ENCODE measurements at regions of chr16 and their contacts with region 1.

Region 1: GRCh38 chr16:27505297-27506236 is 44.1 kb downstream of the GTF3C1 start:
- DNase-seq: no peak
- H3K4me3 ChIP-seq: no peak overlapping the region
- H3K27ac ChIP-seq: no peak overlapping the region
- H3K4me1 ChIP-seq: no peaks in the 10 kb centered on the region
- H3K27me3 ChIP-seq: no peaks in the 10 kb centered on the region

Region 2: GRCh38 chr16:27217256-27217655 is 288.3 kb before region 1 on chr16:
- CTCF ChIA-PET with region 1: no interaction called
- POLR2A ChIA-PET with region 1: no interaction called
- DNase-seq: no peak
- H3K4me3 ChIP-seq: no peak overlapping the region
- H3K27ac ChIP-seq: no peak overlapping the region
- H3K4me1 ChIP-seq: no peaks in the 10 kb centered on the region
- H3K27me3 ChIP-seq: no peaks in the 10 kb centered on the region

Region 3: GRCh38 chr16:27426423-27427408 is 78.9 kb before region 1 on chr16:
- CTCF ChIA-PET with region 1: no interaction called
- POLR2A ChIA-PET with region 1: no interaction called
- DNase-seq: peak; percentile 65 to 95 (median 92)
- H3K4me3 ChIP-seq: peak overlapping the region in 1 of 7 experiments; percentile 25
- H3K27ac ChIP-seq: no peak overlapping the region
- H3K4me1 ChIP-seq: peaks cover 4 to 48% (median 26%) of the 10 kb centered on the region in 4 experiments
- H3K27me3 ChIP-seq: no peaks in the 10 kb centered on the region

Region 4: GRCh38 chr16:27515874-27516353 is 10.3 kb after region 1 on chr16:
- CTCF ChIA-PET with region 1: interaction called, 10 read pairs
- POLR2A ChIA-PET with region 1: no interaction called
- DNase-seq: peak in 2 of 3 donors; percentile 47
- H3K4me3 ChIP-seq: no peak overlapping the region
- H3K27ac ChIP-seq: no peak overlapping the region
- H3K4me1 ChIP-seq: peaks cover 0 to 2% (median under 1%) of the 10 kb centered on the region in 4 experiments
- H3K27me3 ChIP-seq: no peaks in the 10 kb centered on the region

Region 5: GRCh38 chr16:27600381-27600780 is 94.8 kb after region 1 on chr16:
- CTCF ChIA-PET with region 1: no interaction called
- POLR2A ChIA-PET with region 1: no interaction called
- DNase-seq: no peak
- H3K4me3 ChIP-seq: no peak overlapping the region
- H3K27ac ChIP-seq: no peak overlapping the region
- H3K4me1 ChIP-seq: no peaks in the 10 kb centered on the region
- H3K27me3 ChIP-seq: no peaks in the 10 kb centered on the region

Measured in common myeloid progenitor, CD34-positive (primary cell).